ENCODE measurements at regions of chr2 and their contacts with region 1.

Region 1: DNA sequence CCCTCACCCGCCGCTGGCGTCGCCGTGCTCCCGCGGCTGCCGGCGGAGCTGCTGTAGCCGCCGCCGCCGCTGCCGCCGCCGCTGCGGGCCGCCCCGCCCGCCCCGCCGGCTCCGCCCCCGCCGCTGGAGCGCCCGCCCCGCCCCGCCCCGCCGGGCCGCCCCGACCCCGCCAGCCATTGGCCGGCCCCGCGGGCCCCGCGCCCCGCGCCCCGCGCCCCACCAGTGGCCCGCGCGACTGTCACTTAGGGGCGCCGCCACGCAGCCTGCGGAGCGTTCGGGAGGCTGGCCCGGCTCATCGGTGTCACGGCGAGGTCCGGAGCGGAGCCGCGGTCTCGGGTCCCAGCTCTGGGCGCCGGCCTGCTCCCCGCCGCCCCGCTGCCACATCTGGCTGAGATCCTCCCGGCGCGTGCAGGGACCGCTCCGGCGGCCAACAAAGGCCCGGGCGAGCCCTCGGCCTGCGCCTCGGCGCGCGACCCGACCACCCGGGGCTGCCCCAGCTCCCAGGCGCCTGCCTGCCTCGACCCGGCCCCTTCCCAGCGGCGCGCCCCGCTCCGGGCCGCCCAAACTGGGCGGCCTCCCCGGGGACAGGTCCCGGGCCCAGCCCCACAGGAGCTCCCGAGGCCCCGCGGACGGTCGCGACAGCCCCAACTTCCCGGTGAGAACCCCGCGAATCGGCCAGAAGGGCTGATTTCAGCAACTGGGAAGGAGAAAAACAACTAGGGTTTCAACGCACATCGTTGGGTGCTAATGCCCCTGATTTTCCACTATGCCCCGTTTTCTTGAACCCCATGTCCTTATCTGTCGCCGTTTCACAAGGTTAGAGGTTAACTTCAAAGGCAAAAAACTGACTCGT is at the start of gene MGAT4A:
- DNase-seq: peak; percentile 83
- ATAC-seq: peak; percentile 95 to 96
- total RNA-seq, gene MGAT4A: 28.2 to 41.6 TPM

Region 2: DNA sequence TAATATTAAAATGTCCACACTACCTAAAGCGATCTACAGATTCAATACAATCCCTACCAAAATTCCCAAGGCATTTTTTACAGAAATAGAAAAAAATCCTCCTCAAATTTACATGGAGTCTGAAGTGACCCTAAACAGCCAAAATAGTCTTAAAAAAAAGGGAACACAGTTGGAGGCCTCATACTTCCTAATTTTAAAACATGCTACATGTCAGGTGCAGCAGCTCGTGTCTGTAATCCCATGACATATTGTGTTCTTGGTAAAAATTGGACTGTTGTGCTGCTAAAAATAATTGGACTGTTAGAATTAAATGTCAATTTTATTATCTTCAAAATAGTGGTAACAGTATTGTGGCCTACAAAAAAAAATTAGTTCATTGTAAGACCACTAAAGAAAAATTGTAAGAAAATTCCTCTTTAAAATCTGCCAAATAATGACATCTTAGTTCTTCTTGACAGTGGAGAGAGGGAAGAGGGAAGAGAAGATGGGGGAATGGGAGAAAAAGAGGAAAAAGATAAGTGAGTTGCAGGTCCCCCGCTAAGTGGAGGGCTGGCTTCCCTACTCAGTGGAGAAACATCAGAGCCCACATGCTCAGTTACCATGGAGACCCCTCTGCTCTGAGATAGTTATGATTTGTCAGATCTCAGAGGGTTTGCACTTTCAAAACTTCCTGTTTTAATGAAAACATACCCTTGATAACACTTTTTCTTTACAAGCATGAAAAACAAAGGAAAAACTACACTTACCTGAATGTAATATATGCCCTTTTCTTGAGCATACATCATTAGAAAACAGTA is 76.4 kb before region 1 on chr2:
- intact Hi-C with region 1: loop called (anchors 5 to 10 kb)
- DNase-seq: no peak
- ATAC-seq: no peak

Region 3: DNA sequence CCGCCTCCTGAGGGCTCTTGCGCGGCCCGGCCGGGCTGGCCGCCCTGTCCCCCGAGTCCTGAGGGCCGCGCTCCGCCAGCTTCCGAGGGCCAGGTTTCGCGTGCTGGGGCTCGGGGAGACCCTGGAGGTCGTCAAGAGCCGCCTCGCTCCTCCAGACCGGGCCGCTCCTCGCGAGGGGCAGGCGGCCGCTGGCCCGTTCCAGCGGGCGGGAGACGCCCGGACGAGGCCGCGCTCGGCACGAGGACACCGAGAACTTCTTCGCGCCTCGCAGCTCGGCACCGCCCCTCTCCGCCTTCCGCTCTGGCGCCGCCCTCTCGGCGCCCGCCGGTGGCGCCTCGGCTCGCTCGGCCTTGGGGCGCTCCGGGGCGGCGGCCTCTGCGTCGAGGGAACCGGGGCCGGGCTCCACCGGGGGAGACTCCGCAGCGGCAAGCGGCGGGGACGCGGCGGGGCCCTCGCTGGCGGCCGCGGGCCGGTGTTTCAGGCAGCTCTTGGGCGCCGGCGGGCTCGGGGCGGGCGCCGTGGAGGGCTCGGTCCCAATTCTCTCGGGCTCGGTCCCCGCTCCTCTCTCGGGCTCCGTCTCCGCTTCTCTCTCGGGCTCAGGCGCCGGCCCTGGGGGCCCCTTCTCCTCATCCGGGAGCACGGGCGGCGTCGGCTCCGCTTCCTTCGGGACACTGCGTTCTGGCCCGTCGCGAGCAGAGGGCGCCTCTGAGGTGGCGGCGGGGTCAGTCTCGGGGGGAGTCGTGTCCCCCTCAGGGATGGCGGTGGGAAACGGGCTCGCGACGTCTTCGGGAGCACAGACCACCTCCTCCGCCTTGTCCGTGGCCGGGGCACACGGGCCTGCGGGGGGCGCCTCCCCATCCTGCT is 91.3 kb after region 1 on chr2:
- intact Hi-C with region 1: loop called in 1 of 2 experiments (anchors 10 kb)
- DNase-seq: peak; percentile 78
- ATAC-seq: peak; percentile 76 to 83

Region 4: DNA sequence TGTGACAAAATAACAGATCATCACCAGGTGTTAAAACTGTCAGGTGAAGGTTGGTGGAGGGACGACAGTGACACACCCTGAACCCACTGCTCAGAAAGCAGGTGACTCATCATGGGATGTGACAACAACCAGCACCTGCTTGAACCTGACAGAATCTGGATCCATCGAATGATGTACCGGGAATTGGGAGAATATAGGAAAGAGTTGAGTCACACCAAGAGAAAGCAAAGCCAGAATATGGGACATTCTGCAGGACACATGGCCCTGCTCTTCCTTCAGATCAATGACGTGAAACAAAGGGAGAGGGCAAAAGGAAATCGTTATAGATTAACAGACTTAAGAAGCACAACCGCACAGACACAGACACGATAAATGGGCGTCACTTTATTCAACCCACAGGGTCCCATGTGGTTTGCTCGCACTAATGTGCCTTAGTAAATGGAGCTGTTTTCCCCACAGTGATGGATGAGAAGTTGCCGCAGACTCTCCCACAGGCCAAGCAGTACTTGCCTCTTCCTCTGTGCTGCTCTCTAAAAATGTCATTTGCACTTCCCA is 104.6 kb after region 1 on chr2:
- intact Hi-C with region 1: loop called in 1 of 2 experiments (anchors 2 kb)
- DNase-seq: no peak
- ATAC-seq: no peak